Heart left ventricle (tissue), 16 donors: ENCODE measurements at regions of chr4 and their contacts with region 1.

Region 1: GRCh38 chr4:21134994-21135393 is 434.7 kb downstream of the PACRGL start:
- DNase-seq: no peak
- ATAC-seq: peak in 1 of 4 donors; percentile 31
- H3K4me3 ChIP-seq: no peak overlapping the region
- H3K27ac ChIP-seq: no peak overlapping the region
- H3K4me1 ChIP-seq: no peaks in the 10 kb centered on the region
- H3K27me3 ChIP-seq: no peaks in the 10 kb centered on the region
- CTCF ChIP-seq: peak in 6 of 12 donors; percentile 7 to 33 (median 24)
- POLR2A ChIP-seq: no peak

Region 2: GRCh38 chr4:20778896-20779295 is 356.1 kb before region 1 on chr4:
- intact Hi-C with region 1: loop called in 7 of 10 experiments (anchors 5 to 10 kb)
- DNase-seq: no peak
- ATAC-seq: no peak
- H3K4me3 ChIP-seq: no peak overlapping the region
- H3K27ac ChIP-seq: no peak overlapping the region
- H3K4me1 ChIP-seq: no peaks in the 10 kb centered on the region
- H3K27me3 ChIP-seq: no peaks in the 10 kb centered on the region
- CTCF ChIP-seq: no peak
- POLR2A ChIP-seq: no peak

Region 3: GRCh38 chr4:21512353-21512752 is 377.4 kb after region 1 on chr4:
- intact Hi-C with region 1: no loop called
- DNase-seq: no peak
- ATAC-seq: no peak
- H3K4me3 ChIP-seq: no peak overlapping the region
- H3K27ac ChIP-seq: no peak overlapping the region
- H3K4me1 ChIP-seq: no peaks in the 10 kb centered on the region
- H3K27me3 ChIP-seq: peaks cover 0 to 7% (median 0%) of the 10 kb centered on the region in 9 donors
- CTCF ChIP-seq: peak in 7 of 12 donors; percentile 11 to 62 (median 48)
- POLR2A ChIP-seq: no peak